CD4-positive, alpha-beta T cell (primary cell): ENCODE measurements at regions of chr16 and their contacts with region 1.

Region 1: DNA sequence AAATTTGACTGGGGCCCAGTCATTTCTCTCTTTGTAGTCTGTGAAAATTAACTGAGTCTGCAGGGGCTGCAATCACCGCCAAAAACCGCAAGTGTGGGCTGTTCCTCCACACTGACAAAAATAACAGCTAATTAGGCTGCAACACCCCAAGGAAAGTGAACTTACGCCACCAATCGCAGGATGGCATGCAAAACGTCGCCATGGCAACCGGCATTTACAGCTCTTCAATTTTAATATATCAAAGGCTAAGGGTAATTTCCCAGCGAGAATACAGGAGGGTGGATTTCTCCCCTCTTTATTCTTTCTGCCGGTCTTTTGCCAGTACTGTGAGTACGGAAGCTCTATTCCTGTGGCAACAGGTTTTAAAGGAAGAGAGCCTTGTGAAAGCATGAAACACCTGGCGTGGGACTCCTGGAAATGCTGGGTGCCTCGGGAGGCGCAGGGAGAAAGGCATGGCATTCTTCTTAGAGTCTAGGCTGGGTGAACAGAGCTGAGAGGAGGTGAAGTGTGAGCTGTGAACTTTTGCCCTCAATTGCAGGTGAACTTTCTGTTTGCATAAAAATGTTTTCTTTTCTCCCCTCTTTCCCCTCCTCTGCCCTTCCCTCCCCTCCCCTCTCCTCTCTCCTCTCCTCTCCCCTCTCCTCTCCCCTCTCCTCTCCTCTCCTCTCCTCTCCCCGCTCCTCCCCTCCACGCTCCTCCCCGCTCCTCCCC is 399.7 kb downstream of the XYLT1 start:
- DNase-seq: peak; percentile 58 to 97 (median 76)
- ATAC-seq: peak; percentile 87
- H3K4me3 ChIP-seq: peak overlapping the region; percentile 37
- H3K4me3 Mint-ChIP-seq: peak overlapping the region; percentile 82
- H3K27ac ChIP-seq: peak overlapping the region; percentile 52 to 72
- H3K27ac Mint-ChIP-seq: peak overlapping the region; percentile 91
- H3K4me1 ChIP-seq: peaks cover 15% of the 10 kb centered on the region
- H3K4me1 Mint-ChIP-seq: peaks cover 38% of the 10 kb centered on the region
- H3K27me3 ChIP-seq: no peaks in the 10 kb centered on the region
- H3K27me3 Mint-ChIP-seq: no peaks in the 10 kb centered on the region
- CTCF ChIP-seq: no peak

Region 2: GRCh38 chr16:17013038-17013437 is 58.0 kb before region 1 on chr16:
- CTCF ChIA-PET with region 1: no interaction called
- POLR2A ChIA-PET with region 1: interaction called, 3 read pairs
- intact Hi-C with region 1: loop called in 1 of 2 experiments (anchors 1 kb)
- DNase-seq: no peak
- ATAC-seq: no peak
- H3K4me3 ChIP-seq: peak overlapping the region; percentile 55
- H3K4me3 Mint-ChIP-seq: peak overlapping the region; percentile 74
- H3K27ac ChIP-seq: peak overlapping the region in 1 of 2 donors; percentile 76
- H3K27ac Mint-ChIP-seq: peak overlapping the region; percentile 86
- H3K4me1 ChIP-seq: peaks cover 11% of the 10 kb centered on the region
- H3K4me1 Mint-ChIP-seq: peaks cover 31% of the 10 kb centered on the region
- H3K27me3 ChIP-seq: no peaks in the 10 kb centered on the region
- H3K27me3 Mint-ChIP-seq: no peaks in the 10 kb centered on the region
- CTCF ChIP-seq: no peak

Region 3: DNA sequence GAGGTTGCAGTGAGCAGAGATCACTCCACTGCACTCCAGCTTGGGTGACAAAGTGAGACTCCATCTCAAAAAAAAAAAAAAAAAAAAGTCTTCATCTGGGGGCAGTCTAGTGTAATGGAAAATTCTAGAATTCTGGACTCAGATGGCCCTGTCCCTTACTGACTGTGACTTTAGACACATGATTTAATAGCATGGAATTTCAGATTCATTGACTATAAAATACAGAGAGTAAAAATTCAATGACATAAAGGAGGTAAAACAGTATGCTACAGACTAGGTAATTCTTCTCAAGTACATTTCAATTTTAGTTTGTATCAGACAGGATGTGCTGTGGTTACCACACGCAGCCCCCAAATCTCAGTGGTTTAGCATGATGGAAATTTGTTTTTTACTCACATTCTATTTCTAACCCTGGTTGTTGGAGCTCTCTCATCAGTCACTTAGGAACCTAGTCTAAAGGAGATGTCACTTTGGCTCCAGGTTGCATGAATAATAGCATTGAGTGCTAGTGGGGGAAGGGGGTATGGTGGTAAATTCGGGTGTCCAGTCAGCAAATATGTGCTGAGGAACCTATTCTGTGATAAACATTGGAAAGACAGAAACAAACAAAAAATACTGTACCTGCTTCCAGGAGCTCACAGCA is 44.3 kb before region 1 on chr16:
- CTCF ChIA-PET with region 1: no interaction called
- POLR2A ChIA-PET with region 1: no interaction called
- intact Hi-C with region 1: loop called in 1 of 2 experiments (anchors 1 kb)
- DNase-seq: peak in 5 of 14 experiments; percentile 24 to 59 (median 30)
- ATAC-seq: peak; percentile 90
- H3K4me3 ChIP-seq: no peak overlapping the region
- H3K4me3 Mint-ChIP-seq: peak overlapping the region; percentile 36
- H3K27ac ChIP-seq: no peak overlapping the region
- H3K27ac Mint-ChIP-seq: peak overlapping the region; percentile 85
- H3K4me1 ChIP-seq: peaks cover 16% of the 10 kb centered on the region
- H3K4me1 Mint-ChIP-seq: peaks cover 38% of the 10 kb centered on the region
- H3K27me3 ChIP-seq: no peaks in the 10 kb centered on the region
- H3K27me3 Mint-ChIP-seq: no peaks in the 10 kb centered on the region
- CTCF ChIP-seq: no peak

Region 4: DNA sequence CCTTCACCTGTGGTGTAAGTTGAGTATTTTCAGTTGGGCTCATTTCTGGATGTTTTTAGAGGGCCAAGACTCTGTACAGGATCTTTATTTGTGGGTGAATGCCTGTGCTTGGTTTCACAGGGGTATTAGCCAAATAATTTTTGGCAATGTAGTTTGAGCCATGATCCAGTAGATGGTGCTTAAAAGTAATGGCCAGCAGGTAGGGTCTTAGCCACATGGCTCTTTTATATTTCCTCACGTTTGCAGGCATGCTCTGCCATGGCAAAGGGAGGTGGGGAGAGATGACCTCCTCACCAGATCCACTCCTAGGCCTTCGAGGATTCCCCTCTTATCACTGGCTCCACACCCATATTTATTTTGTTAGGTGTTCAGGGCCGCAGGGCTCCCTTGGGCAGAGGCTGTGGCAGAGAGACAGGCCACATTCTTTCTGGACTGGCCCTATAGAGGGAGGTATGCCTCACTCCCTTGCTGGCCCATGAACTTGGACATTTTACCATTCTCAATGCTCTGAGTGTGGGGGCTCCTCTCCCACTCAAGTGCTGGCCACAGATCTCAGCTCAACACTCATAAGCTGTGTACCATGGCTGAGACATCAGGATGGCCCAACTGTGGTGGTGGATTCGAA is 17.4 kb before region 1 on chr16:
- CTCF ChIA-PET with region 1: no interaction called
- POLR2A ChIA-PET with region 1: no interaction called
- intact Hi-C with region 1: no loop called
- DNase-seq: no peak
- ATAC-seq: no peak
- H3K4me3 ChIP-seq: no peak overlapping the region
- H3K4me3 Mint-ChIP-seq: no peak overlapping the region
- H3K27ac ChIP-seq: no peak overlapping the region
- H3K27ac Mint-ChIP-seq: no peak overlapping the region
- H3K4me1 ChIP-seq: no peaks in the 10 kb centered on the region
- H3K4me1 Mint-ChIP-seq: no peaks in the 10 kb centered on the region
- H3K27me3 ChIP-seq: no peaks in the 10 kb centered on the region
- H3K27me3 Mint-ChIP-seq: no peaks in the 10 kb centered on the region
- CTCF ChIP-seq: no peak

Region 5: GRCh38 chr16:17116595-17117296 is 45.7 kb after region 1 on chr16:
- CTCF ChIA-PET with region 1: no interaction called
- POLR2A ChIA-PET with region 1: no interaction called
- intact Hi-C with region 1: loop called in 1 of 2 experiments (anchors 5 kb)
- DNase-seq: no peak
- ATAC-seq: no peak
- H3K4me3 ChIP-seq: no peak overlapping the region
- H3K4me3 Mint-ChIP-seq: no peak overlapping the region
- H3K27ac ChIP-seq: no peak overlapping the region
- H3K27ac Mint-ChIP-seq: no peak overlapping the region
- H3K4me1 ChIP-seq: no peaks in the 10 kb centered on the region
- H3K4me1 Mint-ChIP-seq: no peaks in the 10 kb centered on the region
- H3K27me3 ChIP-seq: no peaks in the 10 kb centered on the region
- H3K27me3 Mint-ChIP-seq: no peaks in the 10 kb centered on the region
- CTCF ChIP-seq: no peak